ENCODE measurements at regions of chr9 and their contacts with region 1.

Region 1: GRCh38 chr9:23426144-23426543 is 399.9 kb downstream of the ELAVL2 start:
- DNase-seq: no peak
- ATAC-seq: no peak
- H3K4me3 ChIP-seq: no peak overlapping the region
- H3K4me3 Mint-ChIP-seq: no peak overlapping the region
- H3K27ac ChIP-seq: no peak overlapping the region
- H3K27ac Mint-ChIP-seq: no peak overlapping the region
- H3K4me1 ChIP-seq: no peaks in the 10 kb centered on the region
- H3K4me1 Mint-ChIP-seq: no peaks in the 10 kb centered on the region
- H3K27me3 ChIP-seq: no peaks in the 10 kb centered on the region
- H3K27me3 Mint-ChIP-seq: no peaks in the 10 kb centered on the region
- CTCF ChIP-seq: no peak

Region 2: GRCh38 chr9:23290973-23291372 is 135.2 kb before region 1 on chr9:
- CTCF ChIA-PET with region 1: no interaction called
- POLR2A ChIA-PET with region 1: no interaction called
- intact Hi-C with region 1: no loop called
- DNase-seq: no peak
- ATAC-seq: no peak
- H3K4me3 ChIP-seq: no peak overlapping the region
- H3K4me3 Mint-ChIP-seq: no peak overlapping the region
- H3K27ac ChIP-seq: no peak overlapping the region
- H3K27ac Mint-ChIP-seq: no peak overlapping the region
- H3K4me1 ChIP-seq: no peaks in the 10 kb centered on the region
- H3K4me1 Mint-ChIP-seq: no peaks in the 10 kb centered on the region
- H3K27me3 ChIP-seq: no peaks in the 10 kb centered on the region
- H3K27me3 Mint-ChIP-seq: no peaks in the 10 kb centered on the region
- CTCF ChIP-seq: no peak

Region 3: DNA sequence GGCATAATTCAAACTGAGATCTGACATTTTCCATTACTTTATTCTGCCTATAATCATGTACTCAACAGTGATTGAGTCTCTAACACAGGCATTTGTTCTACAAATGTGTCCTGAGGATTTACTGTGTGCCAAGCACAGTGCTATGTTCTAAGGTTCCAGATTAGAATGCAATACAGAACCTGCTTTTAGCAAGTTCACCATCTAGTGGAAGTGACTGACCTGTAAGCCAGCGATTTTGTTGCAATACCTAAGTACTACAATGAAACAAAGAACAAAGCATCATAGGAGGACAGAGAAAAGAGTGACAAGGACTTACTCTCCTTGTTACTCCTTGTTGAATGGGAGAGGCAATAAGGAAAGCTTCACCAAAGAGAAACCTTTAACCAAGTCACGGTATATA is 51.8 kb after region 1 on chr9:
- CTCF ChIA-PET with region 1: no interaction called
- POLR2A ChIA-PET with region 1: no interaction called
- intact Hi-C with region 1: loop called in 1 of 2 experiments (anchors 10 kb)
- DNase-seq: no peak
- ATAC-seq: no peak
- H3K4me3 ChIP-seq: no peak overlapping the region
- H3K4me3 Mint-ChIP-seq: no peak overlapping the region
- H3K27ac ChIP-seq: no peak overlapping the region
- H3K27ac Mint-ChIP-seq: no peak overlapping the region
- H3K4me1 ChIP-seq: no peaks in the 10 kb centered on the region
- H3K4me1 Mint-ChIP-seq: no peaks in the 10 kb centered on the region
- H3K27me3 ChIP-seq: no peaks in the 10 kb centered on the region
- H3K27me3 Mint-ChIP-seq: no peaks in the 10 kb centered on the region
- CTCF ChIP-seq: no peak

Region 4: GRCh38 chr9:23779220-23779619 is 353.1 kb after region 1 on chr9:
- CTCF ChIA-PET with region 1: no interaction called
- POLR2A ChIA-PET with region 1: no interaction called
- intact Hi-C with region 1: no loop called
- DNase-seq: no peak
- ATAC-seq: no peak
- H3K4me3 ChIP-seq: no peak overlapping the region
- H3K4me3 Mint-ChIP-seq: no peak overlapping the region
- H3K27ac ChIP-seq: no peak overlapping the region
- H3K27ac Mint-ChIP-seq: no peak overlapping the region
- H3K4me1 ChIP-seq: no peaks in the 10 kb centered on the region
- H3K4me1 Mint-ChIP-seq: no peaks in the 10 kb centered on the region
- H3K27me3 ChIP-seq: no peaks in the 10 kb centered on the region
- H3K27me3 Mint-ChIP-seq: no peaks in the 10 kb centered on the region
- CTCF ChIP-seq: no peak